Activated CD4-positive, alpha-beta T cell treated with anti-CD3 and anti-CD28 coated beads for 36 hours (primary cell): ENCODE measurements at regions of chr21 and their contacts with region 1.

Region 1: DNA sequence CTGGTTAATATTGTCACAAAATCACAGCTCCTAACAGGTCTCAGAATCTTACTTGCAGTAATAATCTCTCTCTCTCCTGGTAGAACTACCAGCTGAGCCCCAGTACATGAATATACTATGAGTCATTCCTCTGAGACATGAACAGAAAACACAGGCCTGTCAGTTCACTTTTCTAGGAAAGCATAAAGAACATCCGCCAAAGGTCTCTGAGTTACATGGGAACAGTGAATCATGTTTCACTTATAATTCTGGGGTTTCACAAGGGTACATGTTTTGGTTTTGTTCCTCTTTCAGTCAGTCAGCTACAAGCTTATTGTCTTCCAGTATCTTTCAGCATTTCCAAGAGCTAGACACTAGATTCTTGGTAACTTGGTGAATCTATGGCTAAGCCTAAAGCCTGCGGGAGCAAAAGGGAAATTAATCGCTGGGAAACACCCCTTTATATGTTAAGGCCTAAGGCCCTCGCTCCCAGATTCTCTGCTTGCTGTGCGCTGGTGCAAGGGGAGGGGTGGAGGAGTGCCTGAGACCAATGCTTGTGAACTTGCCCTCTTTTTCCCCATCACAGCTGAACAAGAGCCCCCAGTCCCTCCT is 31.7 kb downstream of the IFNGR2 start:
- DNase-seq: peak; percentile 53
- ATAC-seq: peak; percentile 96
- H3K4me3 Mint-ChIP-seq: peak overlapping the region; percentile 4
- H3K27ac Mint-ChIP-seq: peak overlapping the region; percentile 59
- H3K4me1 Mint-ChIP-seq: peaks cover 26% of the 10 kb centered on the region
- H3K27me3 Mint-ChIP-seq: no peaks in the 10 kb centered on the region

Region 2: DNA sequence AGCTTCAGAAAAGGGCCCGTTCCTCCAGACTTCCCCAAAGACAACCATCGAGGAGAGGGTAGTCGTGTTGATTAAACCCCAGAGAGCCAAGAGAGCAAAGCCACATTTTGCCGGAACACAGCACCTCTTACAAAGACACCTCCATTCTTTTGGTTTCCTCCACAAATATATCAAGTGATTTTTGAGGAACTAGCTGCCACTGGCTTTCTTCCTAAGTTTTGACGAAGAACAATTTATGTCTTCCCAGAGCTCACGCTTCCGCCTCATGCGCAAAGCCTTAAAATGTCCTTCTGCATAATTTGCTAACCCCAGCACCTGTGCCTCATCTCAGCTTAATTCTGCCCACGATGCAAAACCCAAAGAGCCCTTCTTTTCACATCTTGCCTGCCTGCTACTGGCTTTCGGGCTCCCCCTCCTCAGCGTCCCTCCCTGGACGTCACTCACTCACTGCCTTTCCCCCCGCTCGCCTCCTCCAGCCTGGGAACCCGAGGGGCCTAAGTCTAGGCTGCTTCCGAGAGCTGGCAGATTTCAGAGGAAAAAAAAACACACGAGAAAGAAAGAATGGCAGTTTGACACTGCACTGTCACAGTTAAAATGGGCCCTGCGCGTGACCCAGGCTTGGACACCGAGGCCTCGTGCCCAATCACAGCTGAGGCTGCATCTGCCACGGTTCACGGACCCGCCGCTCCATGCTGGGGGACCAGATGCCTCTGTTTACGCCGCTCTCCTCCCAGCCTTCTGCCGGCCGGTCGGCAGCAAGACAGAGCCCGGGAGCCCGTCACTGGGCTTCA is 282.7 kb before region 1 on chr21:
- CTCF ChIA-PET with region 1: no interaction called
- POLR2A ChIA-PET with region 1: interaction called, 11 read pairs
- intact Hi-C with region 1: no loop called
- DNase-seq: no peak
- ATAC-seq: no peak
- H3K4me3 Mint-ChIP-seq: no peak overlapping the region
- H3K27ac Mint-ChIP-seq: no peak overlapping the region
- H3K4me1 Mint-ChIP-seq: peaks cover 7% of the 10 kb centered on the region
- H3K27me3 Mint-ChIP-seq: peaks cover 26% of the 10 kb centered on the region

Region 3: GRCh38 chr21:33238565-33239255 is 196.2 kb before region 1 on chr21:
- CTCF ChIA-PET with region 1: no interaction called
- POLR2A ChIA-PET with region 1: no interaction called
- intact Hi-C with region 1: loop called in 1 of 2 experiments (anchors 2 kb)
- DNase-seq: peak; percentile 37
- ATAC-seq: peak; percentile 59
- H3K4me3 Mint-ChIP-seq: peak overlapping the region; percentile 44
- H3K27ac Mint-ChIP-seq: peak overlapping the region; percentile 90
- H3K4me1 Mint-ChIP-seq: peaks cover 84% of the 10 kb centered on the region
- H3K27me3 Mint-ChIP-seq: no peaks in the 10 kb centered on the region

Region 4: GRCh38 chr21:33286600-33287456 is 148.0 kb before region 1 on chr21:
- CTCF ChIA-PET with region 1: no interaction called
- POLR2A ChIA-PET with region 1: no interaction called
- intact Hi-C with region 1: no loop called
- DNase-seq: no peak
- ATAC-seq: no peak
- H3K4me3 Mint-ChIP-seq: no peak overlapping the region
- H3K27ac Mint-ChIP-seq: no peak overlapping the region
- H3K4me1 Mint-ChIP-seq: peaks cover 4% of the 10 kb centered on the region
- H3K27me3 Mint-ChIP-seq: no peaks in the 10 kb centered on the region

Region 5: DNA sequence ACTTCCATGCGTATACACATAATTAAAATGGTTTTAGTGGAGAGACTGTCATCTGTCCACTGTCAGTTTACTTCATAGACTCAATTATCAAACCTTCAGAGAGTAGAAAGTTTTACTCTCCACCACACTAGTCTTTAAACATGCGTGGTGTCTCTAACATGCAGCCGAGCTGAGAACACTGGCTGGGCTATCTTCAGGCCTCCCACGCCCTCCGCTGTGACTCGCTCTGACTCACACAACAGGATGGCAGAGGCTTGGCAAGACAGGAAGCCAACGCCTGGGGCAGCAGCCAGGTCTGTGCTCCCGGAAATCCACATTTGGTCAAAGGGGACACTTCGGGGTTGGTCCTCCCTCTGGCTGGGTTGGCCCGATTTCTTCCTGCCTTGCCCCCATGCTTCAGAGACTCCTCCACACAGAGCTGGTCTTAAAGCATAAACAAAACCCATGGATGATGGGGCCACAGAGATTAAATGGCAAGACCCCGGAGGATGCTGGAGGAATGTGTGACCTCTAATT is 54.3 kb before region 1 on chr21:
- CTCF ChIA-PET with region 1: interaction called, 11 read pairs
- POLR2A ChIA-PET with region 1: interaction called, 9 read pairs
- intact Hi-C with region 1: loop called (anchors 1 kb)
- DNase-seq: peak; percentile 96
- ATAC-seq: peak; percentile 85
- H3K4me3 Mint-ChIP-seq: peak overlapping the region; percentile 19
- H3K27ac Mint-ChIP-seq: peak overlapping the region; percentile 88
- H3K4me1 Mint-ChIP-seq: peaks cover 62% of the 10 kb centered on the region
- H3K27me3 Mint-ChIP-seq: peaks cover 4% of the 10 kb centered on the region

Region 6: GRCh38 chr21:33403779-33404585 is 30.9 kb before region 1 on chr21:
- CTCF ChIA-PET with region 1: interaction called, 3 read pairs
- POLR2A ChIA-PET with region 1: interaction called, 9 read pairs
- intact Hi-C with region 1: loop called (anchors 1 kb)
- DNase-seq: peak; percentile 55
- ATAC-seq: peak; percentile 36
- H3K4me3 Mint-ChIP-seq: peak overlapping the region; percentile 86
- H3K27ac Mint-ChIP-seq: peak overlapping the region; percentile 89
- H3K4me1 Mint-ChIP-seq: peaks cover 40% of the 10 kb centered on the region
- H3K27me3 Mint-ChIP-seq: peaks cover 7% of the 10 kb centered on the region